Ovary (tissue), 10 donors: ENCODE measurements at regions of chr4 and their contacts with region 1.

Region 1: GRCh38 chr4:7055111-7055989 is 12.2 kb downstream of the TADA2B start:
- DNase-seq: peak in 1 of 5 donors; percentile 13
- H3K4me3 ChIP-seq: no peak overlapping the region
- H3K27ac ChIP-seq: no peak overlapping the region
- H3K4me1 ChIP-seq: peaks cover 7% of the 10 kb centered on the region
- H3K27me3 ChIP-seq: no peaks in the 10 kb centered on the region
- CTCF ChIP-seq: no peak
- EP300 ChIP-seq: no peak
- POLR2A ChIP-seq: no peak

Region 2: DNA sequence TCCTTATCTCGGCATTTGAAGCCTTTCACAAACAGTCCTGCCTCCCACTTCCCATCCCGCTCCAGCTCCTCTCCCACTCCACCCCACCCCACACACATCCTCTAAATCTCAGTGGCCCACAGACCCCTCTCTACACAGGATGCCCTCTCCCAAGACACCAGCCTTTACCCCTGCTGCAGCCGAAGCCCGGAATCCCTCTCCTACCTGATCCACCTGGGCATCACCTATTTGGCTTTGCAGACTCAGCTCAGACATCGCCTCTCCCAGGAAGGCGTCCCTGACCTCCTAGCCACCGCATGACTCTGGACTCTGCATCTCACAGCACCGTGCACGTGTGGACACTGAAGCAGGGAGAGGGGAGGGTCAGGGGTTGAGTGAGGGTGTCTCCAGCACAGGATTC is 594.5 kb before region 1 on chr4:
- intact Hi-C with region 1: no loop called
- DNase-seq: peak in 1 of 5 donors; percentile 0
- H3K4me3 ChIP-seq: no peak overlapping the region
- H3K27ac ChIP-seq: no peak overlapping the region
- H3K4me1 ChIP-seq: no peaks in the 10 kb centered on the region
- H3K27me3 ChIP-seq: no peaks in the 10 kb centered on the region
- CTCF ChIP-seq: no peak
- EP300 ChIP-seq: no peak
- POLR2A ChIP-seq: no peak

Region 3: DNA sequence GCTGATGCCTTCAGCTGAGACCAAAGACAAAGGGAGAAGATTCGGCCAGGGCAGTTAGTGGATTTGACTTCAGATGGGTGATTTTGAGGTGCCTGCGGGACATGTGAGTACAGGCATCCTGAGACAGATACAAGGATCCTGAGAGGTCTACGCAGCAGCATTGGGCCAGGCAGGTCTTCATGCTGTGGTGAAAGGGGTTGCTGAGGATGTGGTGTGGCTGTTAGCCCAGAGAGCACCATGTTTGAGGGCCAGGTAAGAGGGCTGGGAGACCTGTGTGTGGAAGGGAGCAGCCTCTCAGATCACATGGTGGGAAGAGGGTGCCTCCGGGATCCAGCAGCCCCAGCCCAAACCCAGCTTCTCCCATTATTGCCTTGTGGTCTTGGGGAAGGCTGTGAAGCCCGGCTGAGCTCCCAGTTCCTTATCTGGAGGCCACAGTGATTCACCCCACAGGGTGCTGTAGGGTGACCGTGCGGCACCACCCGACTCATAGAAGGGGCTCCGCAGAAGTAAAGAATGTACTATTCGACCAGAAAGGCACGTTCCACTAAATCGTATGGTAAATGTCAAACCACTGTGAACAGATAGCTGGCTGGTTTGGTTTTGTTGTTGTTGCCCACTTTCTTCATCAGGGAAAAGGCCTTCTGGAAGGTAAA is 39.8 kb before region 1 on chr4:
- intact Hi-C with region 1: loop called in 1 of 4 experiments (anchors 1 kb)
- DNase-seq: no peak
- H3K4me3 ChIP-seq: no peak overlapping the region
- H3K27ac ChIP-seq: no peak overlapping the region
- H3K4me1 ChIP-seq: no peaks in the 10 kb centered on the region
- H3K27me3 ChIP-seq: no peaks in the 10 kb centered on the region
- CTCF ChIP-seq: no peak
- EP300 ChIP-seq: no peak
- POLR2A ChIP-seq: no peak